Psoas muscle (tissue), 8 donors: ENCODE measurements at regions of chr19 and their contacts with region 1.

Region 1: DNA sequence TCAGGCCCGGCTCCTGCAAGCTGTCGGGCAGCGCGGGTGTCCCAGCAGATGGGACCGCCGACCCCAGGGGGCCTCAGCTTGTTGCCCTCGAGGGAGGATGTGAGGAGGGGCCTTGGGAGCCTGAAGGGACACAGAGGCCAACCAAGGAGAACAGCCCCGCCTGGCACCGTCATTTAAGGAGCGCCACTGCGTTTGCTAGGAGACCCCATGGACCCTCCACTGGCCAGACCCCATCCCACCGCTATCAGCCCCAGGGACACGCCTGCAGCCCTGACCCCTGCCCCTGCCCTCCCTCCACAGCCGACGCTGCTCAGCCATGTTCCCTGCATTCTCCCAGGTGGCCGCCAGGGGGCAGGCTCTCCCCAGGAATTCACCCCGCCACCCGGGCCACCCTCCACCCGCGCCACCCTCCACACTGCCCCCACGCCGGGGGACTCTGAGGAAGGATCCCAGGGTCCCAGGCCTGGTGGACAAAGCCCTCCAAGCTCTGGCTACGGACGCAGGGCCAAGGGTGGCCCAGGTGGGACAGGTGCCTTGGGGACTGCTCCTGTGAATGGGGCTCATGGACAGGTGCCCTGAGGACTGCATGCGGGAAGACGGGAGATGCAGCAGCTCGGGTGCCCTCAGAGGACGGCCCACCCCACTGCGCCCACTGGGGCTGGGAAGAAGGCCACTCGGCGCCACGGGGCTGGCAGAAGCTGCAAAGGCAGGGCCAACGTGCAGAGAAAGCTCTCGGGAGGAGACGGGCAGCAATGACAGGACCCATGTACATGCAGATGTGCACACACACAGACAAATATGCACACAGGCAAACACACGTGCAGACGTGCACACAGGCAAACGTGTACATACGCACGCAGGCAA is 34.4 kb downstream of the PIP5K1C start:
- DNase-seq: peak; percentile 71 to 84
- ATAC-seq: peak; percentile 56 to 77 (median 72)
- H3K4me3 ChIP-seq: no peak overlapping the region
- H3K27ac ChIP-seq: peak overlapping the region; percentile 16
- H3K4me1 ChIP-seq: peaks cover 22% of the 10 kb centered on the region
- H3K27me3 ChIP-seq: no peaks in the 10 kb centered on the region
- CTCF ChIP-seq: peak; percentile 93

Region 2: DNA sequence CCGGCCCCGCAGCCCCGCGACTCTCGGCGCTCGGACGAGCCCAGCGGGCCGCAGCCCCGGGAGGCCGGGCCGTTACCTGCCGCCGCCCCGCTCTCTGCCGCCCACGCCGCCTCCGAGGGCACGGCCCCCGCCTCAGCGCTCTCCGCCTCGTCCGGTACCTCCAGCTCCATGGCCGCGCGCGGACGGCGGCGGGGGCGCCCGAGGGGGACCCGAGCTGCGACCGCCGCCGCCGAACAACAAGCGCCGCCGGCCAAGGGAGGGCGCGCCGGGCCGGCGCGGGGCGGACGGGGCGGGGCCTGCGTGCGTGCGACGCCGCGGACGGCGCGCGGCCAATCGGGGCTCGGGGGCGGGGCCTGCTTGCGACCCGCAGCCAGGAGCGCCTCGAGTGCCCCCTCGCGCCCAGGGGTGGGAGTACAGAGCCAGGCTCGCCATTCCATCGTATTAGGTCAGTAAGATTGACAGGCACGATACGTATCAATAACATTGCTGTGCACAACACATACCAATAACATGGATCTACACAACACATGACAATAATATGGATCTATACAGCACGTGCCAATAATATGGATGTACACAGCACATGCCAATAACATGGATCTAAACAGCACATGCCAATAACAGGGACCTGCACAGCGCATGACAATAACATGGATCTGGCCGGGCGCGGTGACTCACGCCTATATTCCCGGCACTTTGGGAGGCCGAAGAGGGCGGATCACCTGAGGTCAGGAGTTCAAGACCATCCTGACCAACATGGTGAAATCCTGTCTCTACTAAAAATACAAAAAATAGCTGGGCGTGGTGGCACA is 34.5 kb after region 1 on chr19 and contains the start of gene PIP5K1C:
- intact Hi-C with region 1: loop called (anchors 2 kb)
- DNase-seq: peak; percentile 90 to 95
- ATAC-seq: peak; percentile 97 to 99 (median 98)
- H3K4me3 ChIP-seq: peak within 1 kb of the TSS; percentile 72
- H3K27ac ChIP-seq: peak within 1 kb of the TSS; percentile 68
- H3K4me1 ChIP-seq: peaks cover 6% of the 10 kb centered on the region
- H3K27me3 ChIP-seq: no peaks in the 10 kb centered on the region
- CTCF ChIP-seq: peak; percentile 92
- total RNA-seq, gene PIP5K1C: 13.5 to 22.4 (median 17.9) TPM

Region 3: DNA sequence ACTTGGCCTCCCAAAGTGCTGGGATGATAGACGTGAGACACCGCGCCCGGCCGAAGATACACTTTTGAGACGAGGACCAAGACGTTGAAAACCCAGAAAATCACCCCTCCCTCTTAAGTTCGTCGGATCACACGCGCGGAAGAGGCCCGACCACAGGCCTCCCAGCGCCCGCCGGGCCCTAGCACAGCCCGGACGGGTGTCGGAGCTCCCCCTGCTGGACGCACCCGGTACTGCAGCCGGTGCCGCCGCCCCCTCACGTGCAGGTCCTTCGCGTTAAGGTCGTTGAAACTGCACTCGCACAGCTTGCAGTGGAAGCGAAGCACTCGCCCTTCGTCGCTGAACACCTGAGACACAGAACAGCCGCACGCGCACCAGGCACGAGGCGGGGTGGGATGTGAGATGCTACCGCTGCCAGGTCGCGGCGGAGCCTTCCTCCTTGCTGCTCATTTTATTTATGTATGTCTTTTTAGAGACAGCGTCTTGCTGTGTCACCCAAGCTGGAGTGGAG is 156.0 kb after region 1 on chr19:
- intact Hi-C with region 1: loop called in 1 of 2 experiments (anchors 2 kb)
- DNase-seq: peak; percentile 56 to 73
- ATAC-seq: peak; percentile 65 to 88 (median 79)
- H3K4me3 ChIP-seq: no peak overlapping the region
- H3K27ac ChIP-seq: no peak overlapping the region
- H3K4me1 ChIP-seq: no peaks in the 10 kb centered on the region
- H3K27me3 ChIP-seq: peaks cover 0 to 38% (median 12%) of the 10 kb centered on the region in 3 donors
- CTCF ChIP-seq: peak; percentile 98